Activated CD4-positive, alpha-beta memory T cell treated with anti-CD3 and anti-CD28 coated beads, Interleukin-2, amount 10 ng/mL, durations not matched to agents 7 days and 5 days (primary cell): ENCODE measurements at regions of chr6 and their contacts with region 1.

Region 1: DNA sequence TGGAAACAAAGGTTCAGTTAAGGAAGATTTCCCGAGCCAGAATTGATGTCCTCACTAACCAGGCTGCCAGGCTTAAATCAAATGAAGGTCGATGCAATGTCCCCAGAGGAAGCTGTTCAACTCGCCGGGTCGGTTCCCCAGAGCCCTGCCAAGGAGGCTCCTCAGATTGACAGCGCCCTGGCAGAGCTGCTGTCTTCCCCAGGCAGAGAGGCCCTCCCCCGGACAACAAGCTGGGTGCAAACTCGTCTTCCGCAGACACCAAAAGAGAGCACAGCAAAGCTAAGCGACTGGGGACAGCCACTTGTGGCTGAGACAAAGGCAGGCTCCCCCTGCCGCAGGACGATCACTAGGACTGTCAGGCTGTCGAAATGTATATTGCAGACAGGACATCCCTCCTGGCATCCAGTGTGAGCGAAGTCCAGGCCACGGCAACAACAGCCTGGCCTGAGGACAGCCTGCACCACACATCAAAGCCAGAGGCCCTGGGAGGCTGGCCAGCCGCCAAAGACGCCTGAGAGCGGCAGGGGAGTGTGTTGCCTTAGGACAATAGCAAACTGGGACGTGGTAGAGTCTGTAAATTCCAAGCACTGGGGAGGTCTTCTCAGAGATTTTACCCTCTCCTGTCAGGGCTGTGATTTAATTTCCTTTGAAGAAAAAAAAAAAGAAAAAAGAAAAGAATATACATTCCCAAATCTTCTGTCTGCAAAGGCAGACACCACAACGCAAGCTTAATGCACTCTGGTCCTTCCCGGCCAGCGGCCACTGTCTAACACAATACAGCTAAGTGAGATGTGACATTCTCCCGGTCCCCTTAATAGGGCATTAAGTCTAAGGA is 99.1 kb downstream of the HIVEP2 start:
- DNase-seq: peak; percentile 72
- H3K4me3 Mint-ChIP-seq: peak overlapping the region; percentile 79
- H3K27ac Mint-ChIP-seq: peak overlapping the region; percentile 91
- H3K4me1 Mint-ChIP-seq: peaks cover 90% of the 10 kb centered on the region
- H3K27me3 Mint-ChIP-seq: no peaks in the 10 kb centered on the region

Region 2: GRCh38 chr6:142592876-142593275 is 253.0 kb before region 1 on chr6:
- CTCF ChIA-PET with region 1: no interaction called
- POLR2A ChIA-PET with region 1: no interaction called
- DNase-seq: no peak
- H3K4me3 Mint-ChIP-seq: no peak overlapping the region
- H3K27ac Mint-ChIP-seq: no peak overlapping the region
- H3K4me1 Mint-ChIP-seq: peaks cover 1% of the 10 kb centered on the region
- H3K27me3 Mint-ChIP-seq: peaks cover 4% of the 10 kb centered on the region

Region 3: DNA sequence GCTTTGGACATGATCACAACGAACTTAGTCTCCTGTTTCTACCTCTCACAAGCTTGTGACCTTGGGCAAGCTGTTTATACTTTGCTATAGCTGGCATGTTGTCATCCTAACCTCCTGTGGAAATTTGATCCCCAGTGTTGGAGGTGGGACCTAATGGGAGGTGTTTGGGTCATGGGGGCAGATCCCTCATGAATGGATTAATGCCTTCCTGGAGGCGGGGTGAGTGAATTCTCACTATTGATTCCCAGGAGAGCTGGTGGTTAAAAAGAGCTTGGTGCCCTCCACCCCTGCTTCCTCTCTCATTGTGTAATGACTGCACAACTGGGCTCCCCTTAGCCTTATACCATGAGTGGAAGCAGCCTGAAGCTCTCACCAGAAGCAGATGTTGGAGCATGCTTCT is 129.7 kb before region 1 on chr6:
- CTCF ChIA-PET with region 1: no interaction called
- POLR2A ChIA-PET with region 1: no interaction called
- DNase-seq: no peak
- H3K4me3 Mint-ChIP-seq: no peak overlapping the region
- H3K27ac Mint-ChIP-seq: no peak overlapping the region
- H3K4me1 Mint-ChIP-seq: no peaks in the 10 kb centered on the region
- H3K27me3 Mint-ChIP-seq: peaks cover 6% of the 10 kb centered on the region

Region 4: GRCh38 chr6:142819603-142820337 is 26.1 kb before region 1 on chr6:
- CTCF ChIA-PET with region 1: interaction called, 16 read pairs
- POLR2A ChIA-PET with region 1: interaction called, 79 read pairs
- DNase-seq: peak; percentile 52
- H3K4me3 Mint-ChIP-seq: peak overlapping the region; percentile 79
- H3K27ac Mint-ChIP-seq: peak overlapping the region; percentile 92
- H3K4me1 Mint-ChIP-seq: peaks cover 64% of the 10 kb centered on the region
- H3K27me3 Mint-ChIP-seq: no peaks in the 10 kb centered on the region

Region 5: DNA sequence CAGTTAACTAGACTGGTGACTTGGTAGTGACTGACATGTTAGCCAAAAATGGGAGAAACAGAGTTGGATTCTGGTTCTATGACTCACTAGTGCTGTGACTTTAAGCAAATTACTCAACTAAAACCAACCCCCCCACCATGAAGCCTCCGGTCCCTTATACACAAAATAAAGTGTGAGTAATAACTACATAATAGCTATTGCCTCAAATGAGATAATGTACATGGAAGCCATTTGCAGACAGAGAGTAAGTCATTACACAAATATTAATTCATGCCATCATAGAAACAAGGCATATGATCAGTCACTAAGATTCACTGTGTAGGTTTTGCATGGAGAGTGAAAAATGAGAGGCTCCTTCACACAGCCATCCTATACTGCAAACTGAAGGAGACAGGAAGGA is 12.8 kb before region 1 on chr6:
- CTCF ChIA-PET with region 1: interaction called, 3 read pairs
- POLR2A ChIA-PET with region 1: interaction called, 18 read pairs
- DNase-seq: no peak
- H3K4me3 Mint-ChIP-seq: no peak overlapping the region
- H3K27ac Mint-ChIP-seq: no peak overlapping the region
- H3K4me1 Mint-ChIP-seq: peaks cover 33% of the 10 kb centered on the region
- H3K27me3 Mint-ChIP-seq: no peaks in the 10 kb centered on the region

Region 6: DNA sequence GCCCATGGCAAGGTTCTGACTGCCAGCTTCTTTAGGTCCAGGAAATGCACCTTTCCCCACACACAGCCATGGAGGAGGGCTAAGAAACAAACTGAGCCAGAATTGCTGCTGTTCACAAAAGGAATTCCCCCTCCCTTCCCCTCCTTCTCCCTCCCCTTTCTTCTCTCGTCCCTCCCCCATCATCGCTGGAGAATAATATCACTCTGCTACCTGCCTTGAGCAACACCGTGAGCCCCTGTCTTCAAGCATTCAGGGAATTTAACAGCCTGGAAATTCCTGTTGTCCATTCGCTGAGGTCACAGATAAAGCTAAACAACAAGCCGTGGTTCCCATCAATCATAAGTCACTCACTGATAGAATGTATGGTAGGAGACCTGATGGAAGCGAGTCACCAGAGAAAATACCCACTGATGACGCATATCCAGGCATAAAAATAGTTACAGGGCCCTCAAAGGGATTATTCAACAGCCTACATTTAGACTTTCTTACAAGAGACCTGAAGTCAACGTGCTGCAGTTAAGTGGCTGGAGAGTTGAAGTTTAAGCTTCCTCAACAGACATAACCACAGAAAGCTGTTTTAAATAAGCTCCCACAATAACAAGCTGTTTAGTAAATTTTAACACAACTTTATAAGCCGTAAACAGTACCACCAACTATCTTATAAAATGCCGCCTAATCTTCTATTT is 39.5 kb after region 1 on chr6:
- CTCF ChIA-PET with region 1: interaction called, 3 read pairs
- POLR2A ChIA-PET with region 1: interaction called, 29 read pairs
- DNase-seq: peak; percentile 35
- H3K4me3 Mint-ChIP-seq: peak overlapping the region; percentile 84
- H3K27ac Mint-ChIP-seq: peak overlapping the region; percentile 93
- H3K4me1 Mint-ChIP-seq: peaks cover 71% of the 10 kb centered on the region
- H3K27me3 Mint-ChIP-seq: no peaks in the 10 kb centered on the region

Region 7: DNA sequence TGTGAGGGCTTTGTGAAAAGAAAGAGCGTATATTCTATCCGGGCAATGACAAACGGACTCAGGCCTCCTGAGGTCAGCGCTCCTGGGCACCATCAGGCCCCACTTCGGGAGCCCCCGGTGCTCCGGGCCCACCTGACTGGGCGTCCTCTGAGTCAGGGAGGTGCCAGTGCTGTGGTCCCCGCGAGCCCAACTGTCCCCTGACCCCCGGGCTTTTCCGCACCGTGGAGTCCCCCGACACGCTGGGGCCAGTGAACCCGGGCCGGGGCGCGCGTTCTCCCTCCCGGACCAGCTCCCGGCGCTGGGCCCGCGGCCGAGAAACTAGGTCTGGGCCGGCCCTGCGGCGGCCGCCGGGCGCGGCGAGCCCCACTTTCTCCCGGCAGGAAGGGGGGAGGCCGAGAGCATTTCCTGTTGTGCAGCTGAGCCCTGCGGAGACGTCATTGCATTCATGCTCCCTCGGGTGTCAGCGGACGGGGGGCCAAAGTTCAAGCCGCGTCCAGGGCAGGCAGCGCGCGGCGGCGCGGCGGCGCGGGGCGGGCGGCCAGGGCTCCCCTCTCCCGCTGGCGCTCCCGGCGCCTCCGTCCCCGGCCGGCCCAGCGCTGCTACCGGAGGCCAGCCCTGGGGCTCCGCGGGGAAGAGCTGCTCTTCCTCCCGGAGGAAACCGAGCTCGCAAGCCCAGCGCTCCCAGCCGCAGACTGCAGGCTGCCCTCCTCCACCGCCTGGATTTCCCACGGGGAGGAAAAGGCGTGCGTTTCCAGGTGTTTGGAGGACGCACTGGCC is 80.8 kb after region 1 on chr6:
- CTCF ChIA-PET with region 1: interaction called, 4 read pairs
- POLR2A ChIA-PET with region 1: interaction called, 30 read pairs
- DNase-seq: peak; percentile 82
- H3K4me3 Mint-ChIP-seq: peak overlapping the region; percentile 84
- H3K27ac Mint-ChIP-seq: peak overlapping the region; percentile 87
- H3K4me1 Mint-ChIP-seq: peaks cover 42% of the 10 kb centered on the region
- H3K27me3 Mint-ChIP-seq: no peaks in the 10 kb centered on the region

Region 8: GRCh38 chr6:143087856-143088255 is 242.0 kb after region 1 on chr6:
- CTCF ChIA-PET with region 1: no interaction called
- POLR2A ChIA-PET with region 1: no interaction called
- DNase-seq: no peak
- H3K4me3 Mint-ChIP-seq: no peak overlapping the region
- H3K27ac Mint-ChIP-seq: no peak overlapping the region
- H3K4me1 Mint-ChIP-seq: no peaks in the 10 kb centered on the region
- H3K27me3 Mint-ChIP-seq: no peaks in the 10 kb centered on the region